PC-3 (cell line): ENCODE measurements at regions of chr2 and their contacts with region 1.

Region 1: DNA sequence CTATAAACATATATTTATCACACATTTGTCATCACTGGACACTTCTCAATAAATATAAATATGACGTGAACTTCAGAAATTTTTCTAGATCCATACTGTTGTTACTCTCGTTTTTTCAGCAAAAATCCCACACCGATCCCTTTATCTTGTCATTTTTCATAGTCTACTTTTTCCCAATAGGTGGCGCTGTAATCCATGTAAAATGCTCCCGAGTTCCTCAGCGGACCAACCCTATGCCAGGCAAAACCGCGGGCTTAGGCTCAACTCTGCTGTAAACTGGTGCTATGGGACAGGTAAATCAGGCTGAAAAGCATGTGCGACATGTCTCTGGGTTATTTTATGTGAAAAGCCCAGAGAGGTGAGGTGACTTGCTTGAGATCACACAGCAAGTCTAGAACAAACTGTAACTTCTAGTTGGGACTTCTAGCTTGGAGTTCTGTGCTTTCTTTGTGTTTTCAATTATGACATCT is 104.0 kb downstream of the COBLL1 start:
- DNase-seq: peak; percentile 84
- ATAC-seq: peak; percentile 86
- H3K4me3 ChIP-seq: no peak overlapping the region
- H3K27ac ChIP-seq: no peak overlapping the region
- H3K4me1 ChIP-seq: peaks cover 8% of the 10 kb centered on the region; the same call in 1 of the 2 replicates
- H3K27me3 ChIP-seq: no peaks in the 10 kb centered on the region
- CTCF ChIP-seq: peak; percentile 91

Region 2: GRCh38 chr2:164910101-164910899 is 172.7 kb after region 1 on chr2:
- CTCF ChIA-PET with region 1: no interaction called
- POLR2A ChIA-PET with region 1: no interaction called
- intact Hi-C with region 1: loop called (anchors 1 kb)
- DNase-seq: peak; percentile 64
- ATAC-seq: peak; percentile 93
- H3K4me3 ChIP-seq: no peak overlapping the region
- H3K27ac ChIP-seq: no peak overlapping the region
- H3K4me1 ChIP-seq: peaks cover 9% of the 10 kb centered on the region; the same call in 1 of the 2 replicates
- H3K27me3 ChIP-seq: no peaks in the 10 kb centered on the region
- CTCF ChIP-seq: no peak

Region 3: GRCh38 chr2:164917296-164917903 is 179.8 kb after region 1 on chr2:
- CTCF ChIA-PET with region 1: no interaction called
- POLR2A ChIA-PET with region 1: no interaction called
- intact Hi-C with region 1: loop called (anchors 1 kb)
- DNase-seq: peak; percentile 67
- ATAC-seq: peak; percentile 67
- H3K4me3 ChIP-seq: no peak overlapping the region
- H3K27ac ChIP-seq: no peak overlapping the region
- H3K4me1 ChIP-seq: peaks cover 12% of the 10 kb centered on the region
- H3K27me3 ChIP-seq: no peaks in the 10 kb centered on the region
- CTCF ChIP-seq: peak; percentile 71

Region 4: GRCh38 chr2:164981217-164981990 is 243.8 kb after region 1 on chr2:
- CTCF ChIA-PET with region 1: no interaction called
- POLR2A ChIA-PET with region 1: no interaction called
- intact Hi-C with region 1: loop called (anchors 5 kb)
- DNase-seq: peak; percentile 90
- ATAC-seq: peak; percentile 82
- H3K4me3 ChIP-seq: peak overlapping the region; percentile 36; the same call in 1 of the 2 replicates
- H3K27ac ChIP-seq: peak overlapping the region; percentile 94
- H3K4me1 ChIP-seq: peaks cover 42% of the 10 kb centered on the region
- H3K27me3 ChIP-seq: no peaks in the 10 kb centered on the region
- CTCF ChIP-seq: no peak